ENCODE measurements at regions of chr7 and their contacts with region 1.

Region 1: GRCh38 chr7:55951637-55952351 is at the start of gene MRPS17:
- DNase-seq: peak; percentile 88 to 96
- ATAC-seq: peak; percentile 99 to 100 (median 100)
- H3K4me3 ChIP-seq: peak within 1 kb of the TSS; percentile 60
- H3K4me3 Mint-ChIP-seq: peak within 1 kb of the TSS; percentile 99
- H3K27ac ChIP-seq: peak within 1 kb of the TSS; percentile 75
- H3K27ac Mint-ChIP-seq: peak within 1 kb of the TSS; percentile 95 to 99
- H3K4me1 ChIP-seq: peaks cover 15% of the 10 kb centered on the region
- H3K4me1 Mint-ChIP-seq: peaks cover 10 to 17% of the 10 kb centered on the region in 2 donors
- H3K27me3 ChIP-seq: no peaks in the 10 kb centered on the region
- H3K27me3 Mint-ChIP-seq: no peaks in the 10 kb centered on the region
- CTCF ChIP-seq: no peak
- total RNA-seq, gene MRPS17: 6.8 to 12.0 (median 10.4) TPM

Region 2: DNA sequence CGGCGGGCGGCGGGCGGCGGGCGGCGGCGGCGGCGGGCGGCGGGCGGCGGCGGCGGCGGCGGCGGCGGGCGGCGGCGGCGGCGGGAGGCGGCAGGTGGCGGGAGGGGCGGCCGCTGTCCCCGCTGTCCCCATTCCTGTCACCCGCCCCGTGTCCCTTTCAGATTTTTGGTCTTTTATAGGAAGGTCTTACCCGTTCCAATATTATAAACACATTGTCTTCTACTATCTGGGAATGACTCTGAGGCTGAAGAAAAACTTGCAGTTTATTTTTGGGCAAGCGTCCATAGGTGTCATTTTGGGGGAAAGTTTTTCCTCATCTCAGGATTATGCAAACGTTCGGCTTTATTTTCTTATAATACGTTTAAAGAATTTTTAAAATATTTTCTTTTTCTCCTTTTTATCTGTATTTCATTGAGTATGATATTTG is 64.0 kb before region 1 on chr7:
- intact Hi-C with region 1: loop called (anchors 1 kb)
- DNase-seq: peak in 1 of 2 donors; percentile 37
- ATAC-seq: no peak
- H3K4me3 ChIP-seq: peak overlapping the region; percentile 35
- H3K4me3 Mint-ChIP-seq: peak overlapping the region; percentile 89
- H3K27ac ChIP-seq: no peak overlapping the region
- H3K27ac Mint-ChIP-seq: peak overlapping the region; percentile 95 to 97
- H3K4me1 ChIP-seq: peaks cover 5% of the 10 kb centered on the region
- H3K4me1 Mint-ChIP-seq: peaks cover 4 to 10% of the 10 kb centered on the region in 2 donors
- H3K27me3 ChIP-seq: no peaks in the 10 kb centered on the region
- H3K27me3 Mint-ChIP-seq: peaks cover 0 to 4% of the 10 kb centered on the region in 2 donors
- CTCF ChIP-seq: no peak

Region 3: GRCh38 chr7:55964261-55965099 is 12.7 kb after region 1 on chr7 and contains the start of gene NIPSNAP2:
- intact Hi-C with region 1: loop called (anchors 2 kb)
- DNase-seq: peak; percentile 72 to 84
- ATAC-seq: peak; percentile 89 to 93 (median 91)
- H3K4me3 ChIP-seq: peak within 1 kb of the TSS; percentile 57
- H3K4me3 Mint-ChIP-seq: peak within 1 kb of the TSS; percentile 86
- H3K27ac ChIP-seq: peak within 1 kb of the TSS; percentile 80
- H3K27ac Mint-ChIP-seq: peak within 1 kb of the TSS; percentile 82 to 84
- H3K4me1 ChIP-seq: peaks cover 11% of the 10 kb centered on the region
- H3K4me1 Mint-ChIP-seq: peaks cover 9 to 19% of the 10 kb centered on the region in 2 donors
- H3K27me3 ChIP-seq: no peaks in the 10 kb centered on the region
- H3K27me3 Mint-ChIP-seq: no peaks in the 10 kb centered on the region
- CTCF ChIP-seq: peak; percentile 52
- total RNA-seq, gene NIPSNAP2: 35.9 to 44.8 (median 42.8) TPM

Region 4: GRCh38 chr7:56063882-56064625 is 112.3 kb after region 1 on chr7 and contains the start of gene SUMF2:
- intact Hi-C with region 1: loop called (anchors 5 kb)
- DNase-seq: peak; percentile 92 to 97
- ATAC-seq: peak; percentile 88 to 94 (median 94)
- H3K4me3 ChIP-seq: peak within 1 kb of the TSS; percentile 99
- H3K4me3 Mint-ChIP-seq: peak within 1 kb of the TSS; percentile 95
- H3K27ac ChIP-seq: peak within 1 kb of the TSS; percentile 84
- H3K27ac Mint-ChIP-seq: peak within 1 kb of the TSS; percentile 95 to 98
- H3K4me1 ChIP-seq: peaks cover 14% of the 10 kb centered on the region
- H3K4me1 Mint-ChIP-seq: peaks cover 27 to 31% of the 10 kb centered on the region in 2 donors
- H3K27me3 ChIP-seq: no peaks in the 10 kb centered on the region
- H3K27me3 Mint-ChIP-seq: no peaks in the 10 kb centered on the region
- CTCF ChIP-seq: no peak
- total RNA-seq, gene SUMF2: 130 to 147 (median 136) TPM

Region 5: DNA sequence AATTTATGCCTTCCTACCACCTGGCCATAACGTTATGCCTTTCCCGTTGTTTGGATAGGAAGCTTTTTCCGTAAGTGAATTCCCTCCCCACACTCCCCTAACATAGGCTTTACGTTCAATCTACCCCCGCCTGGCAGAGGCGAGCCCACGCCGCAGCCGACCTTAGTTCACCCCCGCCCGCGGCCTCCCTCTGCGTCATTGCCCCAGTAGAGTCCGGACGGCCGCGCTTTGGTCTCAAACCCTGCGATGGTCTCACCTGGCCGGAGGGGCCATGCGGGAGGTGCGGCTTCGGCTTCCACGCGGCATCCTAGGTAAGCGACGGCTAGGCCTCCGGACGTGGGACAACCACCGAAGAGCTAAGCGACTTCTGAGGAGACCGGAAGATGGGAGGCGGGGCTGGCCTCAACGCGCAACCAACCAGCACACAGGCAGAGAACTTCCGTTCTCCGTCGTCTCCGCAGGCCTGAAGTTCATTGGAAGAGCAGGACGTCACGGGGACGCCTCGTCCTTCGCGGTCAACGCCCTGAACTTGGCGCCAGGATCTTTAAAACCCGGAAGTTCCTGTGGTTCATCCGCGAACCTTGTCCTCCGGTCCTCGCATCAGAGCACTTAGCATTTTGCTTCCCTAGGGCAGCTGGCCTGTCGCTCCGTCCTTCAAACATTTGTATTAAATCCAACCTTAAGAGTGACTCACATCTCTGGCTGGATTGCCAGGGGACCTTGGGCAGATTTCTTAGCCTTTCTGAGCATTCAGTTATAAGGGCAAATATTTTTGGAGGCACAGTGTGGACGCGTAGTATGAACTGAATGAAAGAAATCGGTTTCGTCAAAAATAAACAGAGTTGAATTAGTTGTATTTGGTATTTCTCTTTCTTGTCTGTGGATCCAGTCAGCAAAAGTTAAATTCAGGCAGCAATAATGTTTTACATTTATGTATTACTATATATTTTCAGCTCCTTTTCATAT is 154.6 kb after region 1 on chr7 and contains the start of gene CHCHD2:
- intact Hi-C with region 1: loop called (anchors 1 kb)
- DNase-seq: peak; percentile 88 to 99
- ATAC-seq: peak; percentile 96 to 100 (median 98)
- H3K4me3 ChIP-seq: peak within 1 kb of the TSS; percentile 67
- H3K4me3 Mint-ChIP-seq: peak within 1 kb of the TSS; percentile 97
- H3K27ac ChIP-seq: peak within 1 kb of the TSS; percentile 89
- H3K27ac Mint-ChIP-seq: peak within 1 kb of the TSS; percentile 98 to 100
- H3K4me1 ChIP-seq: peaks cover 18% of the 10 kb centered on the region
- H3K4me1 Mint-ChIP-seq: peaks cover 24 to 30% of the 10 kb centered on the region in 2 donors
- H3K27me3 ChIP-seq: no peaks in the 10 kb centered on the region
- H3K27me3 Mint-ChIP-seq: no peaks in the 10 kb centered on the region
- CTCF ChIP-seq: no peak
- total RNA-seq, gene CHCHD2: 176 to 224 (median 184) TPM